ENCODE measurements at regions of chr12 and their contacts with region 1.

Region 1: GRCh38 chr12:49707128-49707811 is at the start of gene FMNL3:
- DNase-seq: peak; percentile 98
- H3K4me3 ChIP-seq: peak within 1 kb of the TSS; percentile 78 to 83 (median 79)
- H3K27ac ChIP-seq: peak within 1 kb of the TSS; percentile 86 to 94 (median 92)
- H3K4me1 ChIP-seq: peaks cover 0 to 40% (median 15%) of the 10 kb centered on the region in 4 donors
- H3K27me3 ChIP-seq: peaks cover 35% of the 10 kb centered on the region
- CTCF ChIP-seq: peak; percentile 87 to 99 (median 95)
- EP300 ChIP-seq: no peak
- POLR2A ChIP-seq: no peak
- total RNA-seq, gene FMNL3: 5.3 to 16.5 (median 8.2) TPM

Region 2: GRCh38 chr12:48946205-48946604 is 761.1 kb before region 1 on chr12:
- in situ Hi-C with region 1: no loop called
- intact Hi-C with region 1: no loop called
- DNase-seq: no peak
- H3K4me3 ChIP-seq: no peak overlapping the region
- H3K27ac ChIP-seq: peak overlapping the region; percentile 52 to 81 (median 66)
- H3K4me1 ChIP-seq: peaks cover 0 to 30% (median 17%) of the 10 kb centered on the region in 4 donors
- H3K27me3 ChIP-seq: no peaks in the 10 kb centered on the region
- CTCF ChIP-seq: no peak
- EP300 ChIP-seq: no peak
- POLR2A ChIP-seq: no peak

Region 3: DNA sequence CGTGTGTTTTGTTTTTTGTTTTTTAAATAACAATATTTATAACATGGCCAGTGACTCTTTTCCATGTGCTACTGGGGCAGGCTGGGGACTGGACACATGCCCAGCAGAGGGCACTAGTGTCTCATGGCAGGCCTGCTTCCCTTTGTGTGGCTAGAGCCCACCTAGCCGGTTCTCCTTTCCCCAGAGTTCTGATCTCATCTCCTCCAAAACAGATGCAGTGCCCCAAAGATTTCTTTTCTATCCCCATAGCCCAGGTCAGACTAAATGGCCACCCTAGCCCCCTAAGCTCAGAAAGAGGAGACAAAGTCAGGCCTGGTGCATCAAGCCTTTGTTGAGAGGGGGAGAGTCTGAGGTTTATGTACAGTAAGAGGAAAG is 62.7 kb before region 1 on chr12:
- in situ Hi-C with region 1: loop called in 3 of 4 experiments (anchors 5 kb)
- intact Hi-C with region 1: loop called (anchors 2 kb)
- DNase-seq: peak; percentile 80
- H3K4me3 ChIP-seq: no peak overlapping the region
- H3K27ac ChIP-seq: no peak overlapping the region
- H3K4me1 ChIP-seq: peaks cover 0 to 7% (median 0%) of the 10 kb centered on the region in 4 donors
- H3K27me3 ChIP-seq: no peaks in the 10 kb centered on the region
- CTCF ChIP-seq: peak; percentile 91 to 94 (median 92)
- EP300 ChIP-seq: no peak
- POLR2A ChIP-seq: no peak

Region 4: DNA sequence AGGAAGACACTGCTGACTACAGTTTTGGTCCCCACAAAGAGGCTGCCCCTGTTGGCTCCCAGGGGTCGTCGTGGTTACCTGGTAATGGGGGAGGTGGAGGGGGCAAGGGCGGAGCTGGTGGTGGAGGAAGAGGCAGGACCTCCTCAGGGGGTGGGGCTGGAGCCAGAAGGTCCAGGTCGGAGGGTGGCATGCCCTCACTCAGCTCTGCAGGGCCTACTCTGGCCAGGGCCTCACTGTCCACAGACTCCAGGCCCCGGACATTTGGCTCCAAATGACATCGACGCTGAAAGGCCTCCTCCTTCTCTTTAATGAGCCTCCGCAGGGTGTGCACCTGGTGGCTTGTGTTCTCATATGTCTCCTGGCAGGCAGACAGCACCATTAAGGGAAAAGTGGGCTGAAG is 55.4 kb before region 1 on chr12:
- in situ Hi-C with region 1: loop called in 1 of 4 experiments (anchors 5 kb)
- intact Hi-C with region 1: no loop called
- DNase-seq: no peak
- H3K4me3 ChIP-seq: no peak overlapping the region
- H3K27ac ChIP-seq: no peak overlapping the region
- H3K4me1 ChIP-seq: peaks cover 0 to 7% (median 0%) of the 10 kb centered on the region in 4 donors
- H3K27me3 ChIP-seq: no peaks in the 10 kb centered on the region
- CTCF ChIP-seq: no peak
- EP300 ChIP-seq: no peak
- POLR2A ChIP-seq: no peak

Region 5: DNA sequence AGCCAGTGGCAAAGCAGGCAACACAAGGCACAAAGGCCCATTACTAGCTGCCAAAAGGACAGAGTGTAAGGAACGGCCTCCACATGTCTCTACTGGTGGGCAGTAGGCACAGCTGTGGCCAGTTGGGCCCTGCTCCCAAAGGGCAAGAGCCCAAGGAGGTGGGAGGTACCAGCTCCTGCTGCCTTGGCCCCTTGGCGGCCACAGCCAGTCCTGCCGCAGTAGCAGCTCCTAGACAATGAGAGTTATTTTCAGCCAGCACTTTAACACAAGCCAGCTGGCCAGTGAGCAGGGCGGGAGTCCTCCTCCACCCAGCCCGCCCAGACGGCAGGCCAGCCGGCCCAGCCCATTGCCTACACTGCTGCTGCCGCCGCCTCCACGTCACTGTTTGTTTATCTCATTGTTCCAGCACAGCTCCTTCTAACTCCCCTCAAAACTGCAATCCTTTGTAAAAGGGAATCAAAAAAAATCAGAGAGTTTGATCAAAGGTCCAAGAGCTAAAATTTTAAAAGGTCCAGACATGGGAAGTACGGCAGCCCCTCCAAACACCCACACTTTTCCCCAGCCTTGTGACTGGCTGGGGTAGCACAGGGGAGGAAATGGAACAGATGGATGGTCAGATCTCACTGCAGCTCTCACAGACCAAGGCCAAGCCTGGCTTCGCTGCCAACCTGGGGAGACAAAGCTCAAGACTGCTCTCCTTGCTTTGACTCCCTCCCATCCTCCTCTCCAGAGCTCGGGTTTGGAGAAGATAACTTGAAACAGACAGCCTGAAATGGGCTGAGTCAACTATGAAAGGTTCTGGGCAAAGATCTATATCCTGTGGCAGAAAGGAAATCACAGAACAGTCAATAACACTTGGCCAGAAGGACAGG is 33.6 kb before region 1 on chr12:
- in situ Hi-C with region 1: no loop called
- intact Hi-C with region 1: loop called (anchors 2 kb)
- DNase-seq: peak; percentile 86
- H3K4me3 ChIP-seq: no peak overlapping the region
- H3K27ac ChIP-seq: peak overlapping the region; percentile 82 to 90 (median 84)
- H3K4me1 ChIP-seq: peaks cover 32 to 54% (median 44%) of the 10 kb centered on the region in 4 donors
- H3K27me3 ChIP-seq: no peaks in the 10 kb centered on the region
- CTCF ChIP-seq: peak; percentile 26 to 73 (median 36)
- EP300 ChIP-seq: no peak
- POLR2A ChIP-seq: peak; percentile 49

Region 6: GRCh38 chr12:49693994-49694393 is 13.3 kb before region 1 on chr12:
- in situ Hi-C with region 1: no loop called
- intact Hi-C with region 1: no loop called
- DNase-seq: no peak
- H3K4me3 ChIP-seq: no peak overlapping the region
- H3K27ac ChIP-seq: no peak overlapping the region
- H3K4me1 ChIP-seq: peaks cover 5 to 19% (median 7%) of the 10 kb centered on the region in 4 donors
- H3K27me3 ChIP-seq: no peaks in the 10 kb centered on the region
- CTCF ChIP-seq: no peak
- EP300 ChIP-seq: no peak
- POLR2A ChIP-seq: no peak

Measured in transverse colon (tissue), 4 donors.